GM10248 (cell line): ENCODE measurements at regions of chr12 and their contacts with region 1.

Region 1: DNA sequence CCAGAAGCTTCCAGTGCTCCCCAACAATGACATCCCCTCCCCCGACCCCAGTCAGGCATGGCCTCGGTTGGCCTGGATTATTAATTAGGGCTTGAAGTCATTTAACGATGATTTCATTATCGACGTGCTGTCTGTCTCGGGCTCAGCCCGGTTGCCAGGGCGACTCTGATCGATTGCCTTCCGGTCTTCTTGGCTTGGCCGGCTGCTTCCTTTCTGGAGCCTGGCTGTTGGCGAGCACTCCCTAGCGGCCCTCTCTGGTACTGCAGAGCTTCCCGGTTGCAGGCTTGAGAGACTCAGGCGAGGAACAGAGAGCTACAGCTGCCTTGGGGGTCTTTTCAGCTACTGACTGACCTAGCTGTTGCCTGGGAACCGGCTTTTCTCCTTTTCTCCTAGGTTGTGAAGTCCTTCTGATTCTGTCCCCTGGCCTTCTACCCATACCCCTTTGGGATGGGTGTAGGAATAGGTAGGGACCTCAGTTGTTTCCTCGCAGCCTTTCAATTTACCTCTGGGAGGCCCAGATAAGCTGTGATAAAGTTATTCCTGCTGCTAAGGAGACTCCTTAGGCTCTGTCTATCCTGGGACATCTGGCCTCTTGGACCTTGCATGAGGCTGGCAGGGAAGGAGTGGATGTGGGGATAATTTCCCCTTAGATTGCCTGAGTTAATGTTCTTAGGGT is 5.5 kb upstream of the CISTR start:
- DNase-seq: peak; percentile 89
- CTCF ChIP-seq: peak; percentile 96

Region 2: DNA sequence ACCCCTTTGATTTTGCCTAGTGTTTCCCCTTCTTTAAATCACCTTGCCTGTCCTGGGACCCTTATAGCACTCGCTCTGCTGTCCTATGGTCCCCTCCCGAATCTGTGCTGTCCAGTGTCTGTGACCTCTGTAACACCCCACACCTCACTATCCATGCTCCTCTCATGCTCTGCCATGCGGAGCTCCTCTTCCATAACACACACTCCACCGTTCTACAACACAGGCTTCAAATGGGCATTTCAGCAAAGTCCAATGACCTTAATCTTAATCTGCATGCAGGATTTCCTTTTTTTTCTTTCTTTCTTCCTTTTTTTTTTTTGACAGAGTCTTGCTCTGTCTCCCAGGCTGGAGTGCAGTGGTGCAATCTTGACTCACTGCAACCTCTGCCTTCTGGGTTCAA is 628.1 kb before region 1 on chr12:
- CTCF ChIA-PET with region 1: no interaction called
- POLR2A ChIA-PET with region 1: no interaction called
- DNase-seq: no peak
- CTCF ChIP-seq: no peak

Region 3: GRCh38 chr12:53638057-53638456 is 119.2 kb before region 1 on chr12:
- CTCF ChIA-PET with region 1: no interaction called
- POLR2A ChIA-PET with region 1: no interaction called
- DNase-seq: no peak
- CTCF ChIP-seq: no peak

Region 4: DNA sequence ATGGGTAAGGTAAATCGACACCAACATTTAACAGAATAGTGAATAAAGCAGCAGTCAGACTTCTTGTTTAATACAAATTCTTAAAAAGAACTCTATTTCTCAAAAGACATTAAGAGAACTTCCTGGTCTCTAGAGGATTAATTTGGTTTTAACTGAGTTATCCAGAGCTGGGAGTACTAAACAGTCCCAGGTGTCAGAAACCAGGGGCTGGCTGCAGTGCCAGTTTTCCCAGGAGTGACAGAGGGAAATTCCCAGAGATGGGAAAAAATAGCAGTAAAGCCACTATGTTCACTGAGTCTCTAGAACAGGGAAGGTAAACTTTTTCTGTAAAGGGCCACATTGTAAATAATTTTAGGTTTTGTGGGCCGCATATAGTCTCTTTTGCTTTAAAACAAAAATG is 90.2 kb before region 1 on chr12:
- CTCF ChIA-PET with region 1: no interaction called
- POLR2A ChIA-PET with region 1: no interaction called
- DNase-seq: no peak
- CTCF ChIP-seq: no peak

Region 5: DNA sequence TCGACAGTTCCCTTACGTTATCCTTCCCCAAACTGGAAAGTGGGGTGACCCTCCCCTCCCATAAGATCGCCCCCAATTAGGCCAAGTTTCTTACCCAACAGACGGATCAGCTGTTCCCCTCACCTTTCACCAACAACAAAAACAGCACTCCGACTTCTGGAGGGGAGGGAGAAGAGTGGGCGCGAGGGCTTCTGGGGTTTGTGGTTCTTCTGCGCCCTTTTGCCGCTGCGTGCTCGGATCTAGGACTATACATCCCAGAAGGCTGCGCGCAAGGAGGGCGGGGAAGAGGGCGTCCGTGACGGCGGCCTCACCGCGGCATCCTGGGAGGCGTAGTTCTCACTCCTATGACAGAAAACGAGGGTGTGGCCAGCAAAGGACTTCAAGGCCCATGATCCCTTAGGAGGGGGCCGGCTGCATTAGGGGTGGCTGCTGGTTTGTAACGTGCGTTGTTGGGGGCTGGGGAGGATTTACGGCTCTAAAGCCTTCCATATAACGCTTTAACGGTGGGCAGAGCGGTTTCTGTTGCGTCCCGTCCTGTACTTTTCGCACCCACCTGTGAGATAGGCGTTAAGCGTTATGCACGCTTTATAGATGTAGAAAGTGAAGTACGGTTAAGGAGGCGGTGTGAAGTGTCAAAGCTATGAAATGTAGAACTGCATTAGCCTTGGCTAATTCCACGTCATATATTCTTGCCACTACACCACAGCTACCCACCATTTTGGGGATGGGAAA is 29.8 kb before region 1 on chr12 and contains the start of gene CALCOCO1:
- CTCF ChIA-PET with region 1: interaction called, 28 read pairs
- POLR2A ChIA-PET with region 1: no interaction called
- DNase-seq: peak; percentile 97
- CTCF ChIP-seq: no peak

Region 6: GRCh38 chr12:53733051-53733806 is 24.0 kb before region 1 on chr12:
- CTCF ChIA-PET with region 1: interaction called, 28 read pairs
- POLR2A ChIA-PET with region 1: no interaction called
- DNase-seq: no peak
- CTCF ChIP-seq: no peak

Region 7: GRCh38 chr12:53770281-53770680 is 13.0 kb after region 1 on chr12:
- CTCF ChIA-PET with region 1: interaction called, 20 read pairs
- POLR2A ChIA-PET with region 1: no interaction called
- DNase-seq: no peak
- CTCF ChIP-seq: no peak

Region 8: GRCh38 chr12:54053751-54054741 is 296.8 kb after region 1 on chr12 and contains the start of gene HOXC4:
- CTCF ChIA-PET with region 1: no interaction called
- POLR2A ChIA-PET with region 1: no interaction called
- DNase-seq: peak; percentile 78
- CTCF ChIP-seq: no peak